H1 (cell line): ENCODE measurements at regions of chr1 and their contacts with region 1.

Region 1: GRCh38 chr1:242128951-242129502 is 130.1 kb upstream of the MAP1LC3C start:
- DNase-seq: no peak
- H3K4me3 ChIP-seq: no peak overlapping the region
- H3K27ac ChIP-seq: no peak overlapping the region
- H3K4me1 ChIP-seq: no peaks in the 10 kb centered on the region
- H3K27me3 ChIP-seq: no peaks in the 10 kb centered on the region
- CTCF ChIP-seq: peak in 2 of 3 experiments; percentile 45 to 61; a peak in 3 of 4 replicates
- EP300 ChIP-seq: no peak
- POLR2A ChIP-seq: no peak
- RAD21 ChIP-seq: peak; percentile 67 to 74

Region 2: GRCh38 chr1:242100921-242101320 is 28.1 kb before region 1 on chr1:
- CTCF ChIA-PET with region 1: interaction called, 10 read pairs
- POLR2A ChIA-PET with region 1: no interaction called
- DNase-seq: no peak
- H3K4me3 ChIP-seq: no peak overlapping the region
- H3K27ac ChIP-seq: no peak overlapping the region
- H3K4me1 ChIP-seq: no peaks in the 10 kb centered on the region
- H3K27me3 ChIP-seq: no peaks in the 10 kb centered on the region
- CTCF ChIP-seq: no peak
- EP300 ChIP-seq: no peak
- POLR2A ChIP-seq: no peak
- RAD21 ChIP-seq: no peak

Region 3: GRCh38 chr1:242139443-242139842 is 10.4 kb after region 1 on chr1:
- CTCF ChIA-PET with region 1: interaction called, 10 read pairs
- POLR2A ChIA-PET with region 1: no interaction called
- DNase-seq: no peak
- H3K4me3 ChIP-seq: no peak overlapping the region
- H3K27ac ChIP-seq: no peak overlapping the region
- H3K4me1 ChIP-seq: no peaks in the 10 kb centered on the region
- H3K27me3 ChIP-seq: no peaks in the 10 kb centered on the region
- CTCF ChIP-seq: no peak
- EP300 ChIP-seq: no peak
- POLR2A ChIP-seq: no peak
- RAD21 ChIP-seq: no peak